Thyroid gland (tissue), 4 donors: ENCODE measurements at regions of chr12 and their contacts with region 1.

Region 1: GRCh38 chr12:16359512-16360491 is 12.4 kb downstream of the MGST1 start:
- DNase-seq: peak; percentile 53 to 65
- H3K4me3 ChIP-seq: no peak overlapping the region
- H3K27ac ChIP-seq: no peak overlapping the region
- H3K4me1 ChIP-seq: no peaks in the 10 kb centered on the region
- H3K27me3 ChIP-seq: no peaks in the 10 kb centered on the region
- CTCF ChIP-seq: peak; percentile 15 to 66 (median 44)
- POLR2A ChIP-seq: no peak

Region 2: GRCh38 chr12:16165506-16165905 is 194.3 kb before region 1 on chr12:
- intact Hi-C with region 1: loop called (anchors 10 kb)
- DNase-seq: peak; percentile 55 to 56
- H3K4me3 ChIP-seq: no peak overlapping the region
- H3K27ac ChIP-seq: no peak overlapping the region
- H3K4me1 ChIP-seq: no peaks in the 10 kb centered on the region
- H3K27me3 ChIP-seq: no peaks in the 10 kb centered on the region
- CTCF ChIP-seq: peak; percentile 12 to 82 (median 57)
- POLR2A ChIP-seq: no peak

Region 3: GRCh38 chr12:16281157-16281556 is 78.6 kb before region 1 on chr12:
- intact Hi-C with region 1: no loop called
- DNase-seq: no peak
- H3K4me3 ChIP-seq: no peak overlapping the region
- H3K27ac ChIP-seq: no peak overlapping the region
- H3K4me1 ChIP-seq: no peaks in the 10 kb centered on the region
- H3K27me3 ChIP-seq: no peaks in the 10 kb centered on the region
- CTCF ChIP-seq: no peak
- POLR2A ChIP-seq: no peak

Region 4: DNA sequence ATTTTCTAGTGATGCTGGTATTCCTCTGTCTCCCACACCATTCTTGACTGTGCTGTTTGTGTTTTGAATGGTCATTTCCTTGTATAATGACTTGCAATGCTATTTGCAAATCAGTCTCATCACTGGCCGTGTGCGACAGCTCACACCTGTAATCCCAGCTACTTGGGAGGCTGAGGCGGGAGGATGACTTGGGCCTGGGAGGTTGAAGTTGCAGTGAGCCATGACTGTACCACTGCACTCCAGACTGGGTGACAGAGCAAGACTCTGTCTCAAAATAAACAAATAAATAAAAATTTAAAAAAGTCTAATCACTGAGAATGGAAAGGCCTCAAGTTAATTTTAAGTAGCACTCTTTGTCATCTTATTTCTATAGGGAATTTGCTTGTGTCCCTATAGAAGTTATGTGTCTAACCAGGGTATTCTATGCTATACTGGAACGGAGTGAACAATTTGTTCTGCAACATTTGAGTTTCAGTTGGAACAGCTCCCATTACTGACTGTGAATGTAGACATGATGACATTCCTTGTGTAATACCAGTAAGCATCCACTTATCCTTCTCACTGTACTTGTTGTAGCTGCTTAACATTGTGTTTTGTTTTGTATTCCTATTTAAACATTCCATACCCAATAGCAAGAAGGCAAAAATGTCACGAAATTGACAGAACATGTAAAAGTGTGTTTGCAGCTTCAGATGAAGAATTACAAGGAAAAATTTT is 114.0 kb after region 1 on chr12:
- intact Hi-C with region 1: no loop called
- DNase-seq: peak in 1 of 2 donors; percentile 2
- H3K4me3 ChIP-seq: no peak overlapping the region
- H3K27ac ChIP-seq: no peak overlapping the region
- H3K4me1 ChIP-seq: peaks cover 10 to 16% of the 10 kb centered on the region in 2 donors
- H3K27me3 ChIP-seq: no peaks in the 10 kb centered on the region
- CTCF ChIP-seq: peak in 2 of 6 experiments; percentile 30 to 35
- POLR2A ChIP-seq: no peak